Mammary epithelial cell (primary cell): ENCODE measurements at regions of chr2 and their contacts with region 1.

Region 1: GRCh38 chr2:160963957-160964356 is 196.3 kb upstream of the TANK start:
- DNase-seq: no peak
- H3K4me3 ChIP-seq: no peak overlapping the region
- H3K27ac ChIP-seq: no peak overlapping the region
- H3K4me1 ChIP-seq: no peaks in the 10 kb centered on the region
- H3K27me3 ChIP-seq: no peaks in the 10 kb centered on the region
- CTCF ChIP-seq: no peak

Region 2: DNA sequence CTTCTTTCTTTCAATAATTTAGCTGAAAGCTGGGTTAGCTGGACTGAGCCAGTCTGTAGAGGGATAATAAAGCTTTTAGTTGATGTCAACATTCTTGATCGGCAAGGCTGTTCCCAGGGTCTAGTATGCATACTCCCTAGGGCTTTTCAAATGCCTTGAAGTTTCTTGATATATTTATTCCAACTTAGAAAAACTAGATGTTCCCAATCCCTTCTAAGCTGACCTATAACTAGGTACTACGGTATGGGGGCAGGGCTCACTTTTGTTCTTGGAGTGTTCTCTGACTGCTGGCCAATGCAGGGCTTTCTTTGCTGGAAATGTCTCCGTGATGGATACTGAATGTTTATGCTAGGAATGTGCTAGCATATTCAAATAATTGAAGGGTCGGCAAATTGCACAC is 62.3 kb before region 1 on chr2:
- CTCF ChIA-PET with region 1: no interaction called
- dilution Hi-C with region 1: loop called (anchors 5 kb)
- in situ Hi-C with region 1: no loop called
- intact Hi-C with region 1: no loop called
- DNase-seq: no peak
- H3K4me3 ChIP-seq: no peak overlapping the region
- H3K27ac ChIP-seq: no peak overlapping the region
- H3K4me1 ChIP-seq: no peaks in the 10 kb centered on the region
- H3K27me3 ChIP-seq: no peaks in the 10 kb centered on the region
- CTCF ChIP-seq: no peak

Region 3: GRCh38 chr2:161017780-161018470 is 54.0 kb after region 1 on chr2:
- CTCF ChIA-PET with region 1: no interaction called
- dilution Hi-C with region 1: no loop called
- in situ Hi-C with region 1: no loop called
- intact Hi-C with region 1: no loop called
- DNase-seq: no peak
- H3K4me3 ChIP-seq: no peak overlapping the region
- H3K27ac ChIP-seq: no peak overlapping the region
- H3K4me1 ChIP-seq: no peaks in the 10 kb centered on the region
- H3K27me3 ChIP-seq: no peaks in the 10 kb centered on the region
- CTCF ChIP-seq: no peak